GM12878 (cell line): ENCODE measurements at regions of chr19 and their contacts with region 1.

Region 1: DNA sequence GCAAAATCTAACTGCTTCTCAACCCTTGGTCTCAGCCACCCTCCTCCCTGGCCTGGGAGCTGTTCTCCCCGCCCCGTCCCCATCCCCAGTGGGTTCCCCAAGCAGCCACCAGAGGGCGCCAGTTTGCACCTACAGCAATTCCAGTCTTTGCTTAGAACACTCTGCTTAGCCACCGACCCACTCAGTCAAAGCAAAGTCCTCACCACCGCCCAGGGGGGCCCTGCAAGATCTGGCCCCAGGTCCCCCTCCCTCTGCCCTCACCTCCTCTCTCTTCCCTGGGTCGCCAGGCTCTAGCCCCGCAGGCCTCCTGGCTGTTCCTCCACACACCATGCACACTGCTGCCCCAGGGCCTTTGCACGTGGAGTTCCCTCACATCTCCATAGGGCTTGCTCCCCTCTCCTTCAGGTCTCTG is 12.4 kb downstream of the TMEM143 start:
- DNase-seq: no peak
- ATAC-seq: peak; percentile 100
- H3K4me3 ChIP-seq: no peak overlapping the region
- H3K27ac ChIP-seq: no peak overlapping the region
- H3K4me1 ChIP-seq: no peaks in the 10 kb centered on the region
- H3K27me3 ChIP-seq: no peaks in the 10 kb centered on the region
- CTCF ChIP-seq: peak; percentile 71 to 93 (median 90)
- EP300 ChIP-seq: no peak
- POLR2A ChIP-seq: no peak
- RAD21 ChIP-seq: peak; percentile 61

Region 2: DNA sequence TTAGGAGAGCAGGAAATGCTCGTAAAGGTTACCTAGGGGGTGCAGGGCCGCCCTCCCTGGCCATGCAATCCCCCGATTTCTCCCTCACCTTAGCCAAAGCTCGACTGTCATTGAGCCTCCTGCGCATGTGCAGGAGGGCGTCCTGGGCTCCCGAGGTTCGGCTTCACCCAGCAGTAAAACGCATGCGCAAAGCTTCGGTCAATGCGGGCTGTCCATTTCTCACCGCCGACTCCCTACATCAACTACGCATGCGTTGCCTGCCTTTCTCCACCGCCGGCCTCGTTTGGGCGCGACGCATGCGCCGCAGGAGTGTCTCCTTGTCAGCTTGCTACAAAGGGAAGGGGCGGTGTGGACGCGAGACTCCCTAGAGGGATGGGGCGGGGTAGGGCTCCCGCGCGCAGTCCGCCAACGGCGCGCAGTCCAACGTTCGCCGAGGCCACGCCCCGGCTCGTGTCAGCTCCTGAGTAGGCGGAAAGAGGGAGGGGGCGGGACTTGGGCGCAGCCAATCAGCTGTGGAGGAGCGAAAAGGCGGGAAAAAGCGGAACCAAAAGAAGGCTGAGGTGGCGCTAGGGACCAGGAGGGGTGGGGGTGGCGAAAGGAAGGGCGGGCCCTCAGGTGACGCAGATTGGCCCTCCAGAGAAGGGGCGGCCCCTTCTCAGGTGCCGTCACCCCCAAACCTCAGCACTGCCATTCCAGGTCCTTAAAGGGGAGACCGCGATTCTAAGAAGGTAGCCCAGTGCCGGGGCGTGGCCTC is 12.6 kb after region 1 on chr19 and contains the starts of genes SYNGR4 and TMEM143:
- CTCF ChIA-PET with region 1: interaction called, 19 read pairs
- POLR2A ChIA-PET with region 1: interaction called, 6 read pairs
- RAD21 ChIA-PET with region 1: interaction called, 4 read pairs
- SMC1A ChIA-PET with region 1: interaction called, 4 read pairs
- in situ Hi-C with region 1: no loop called
- intact Hi-C with region 1: no loop called
- DNase-seq: peak; percentile 99
- ATAC-seq: peak; percentile 90
- H3K4me3 ChIP-seq: peak within 1 kb of the TSS; percentile 82
- H3K27ac ChIP-seq: peak within 1 kb of the TSS; percentile 99
- H3K4me1 ChIP-seq: peaks cover 9% of the 10 kb centered on the region; the same call in 1 of the 2 replicates
- H3K27me3 ChIP-seq: no peaks in the 10 kb centered on the region
- CTCF ChIP-seq: no peak
- EP300 ChIP-seq: peak in 1 of 2 experiments; percentile 33; a peak in 1 of 4 replicates
- POLR2A ChIP-seq: peak; percentile 70
- RAD21 ChIP-seq: no peak
- polyA plus RNA-seq, gene SYNGR4: not detected
- polyA plus RNA-seq, gene TMEM143: 1.5 to 2.4 TPM

Region 3: GRCh38 chr19:48445606-48446481 is 94.5 kb after region 1 on chr19 and contains the start of gene GRWD1:
- CTCF ChIA-PET with region 1: no interaction called
- POLR2A ChIA-PET with region 1: no interaction called
- RAD21 ChIA-PET with region 1: interaction called, 3 read pairs
- SMC1A ChIA-PET with region 1: no interaction called
- in situ Hi-C with region 1: no loop called
- intact Hi-C with region 1: loop called (anchors 1 kb)
- DNase-seq: peak; percentile 95
- ATAC-seq: peak; percentile 93
- H3K4me3 ChIP-seq: peak within 1 kb of the TSS; percentile 87
- H3K27ac ChIP-seq: peak within 1 kb of the TSS; percentile 89
- H3K4me1 ChIP-seq: peaks cover 25% of the 10 kb centered on the region
- H3K27me3 ChIP-seq: peaks cover 0 to 1% of the 10 kb centered on the region in 2 experiments; a peak in 1 of 4 replicates
- CTCF ChIP-seq: 0 out of 6 replicates have a peak, but pooled peaks of 1 of the 3 experiments have one; percentile 1
- EP300 ChIP-seq: no peak
- POLR2A ChIP-seq: peak; percentile 93
- RAD21 ChIP-seq: no peak
- polyA plus RNA-seq, gene GRWD1: 1.4 to 3.0 TPM

Region 4: GRCh38 chr19:48543121-48544056 is 192.0 kb after region 1 on chr19:
- CTCF ChIA-PET with region 1: no interaction called
- POLR2A ChIA-PET with region 1: no interaction called
- RAD21 ChIA-PET with region 1: no interaction called
- SMC1A ChIA-PET with region 1: no interaction called
- in situ Hi-C with region 1: no loop called
- intact Hi-C with region 1: no loop called
- DNase-seq: no peak
- ATAC-seq: no peak
- H3K4me3 ChIP-seq: no peak overlapping the region
- H3K27ac ChIP-seq: no peak overlapping the region
- H3K4me1 ChIP-seq: no peaks in the 10 kb centered on the region
- H3K27me3 ChIP-seq: no peaks in the 10 kb centered on the region
- CTCF ChIP-seq: no peak
- EP300 ChIP-seq: no peak
- POLR2A ChIP-seq: no peak
- RAD21 ChIP-seq: no peak